ENCODE measurements at regions of chr2 and their contacts with region 1.

Region 1: GRCh38 chr2:181891966-181892798 is 652 bp downstream of the ITPRID2 start:
- DNase-seq: peak; percentile 58 to 65 (median 60)
- H3K4me3 ChIP-seq: peak overlapping the region; percentile 70 to 86
- H3K4me3 Mint-ChIP-seq: peak overlapping the region; percentile 88 to 95 (median 92)
- H3K27ac ChIP-seq: peak overlapping the region; percentile 44
- H3K27ac Mint-ChIP-seq: peak overlapping the region; percentile 55 to 91 (median 87)
- H3K4me1 ChIP-seq: peaks cover 25% of the 10 kb centered on the region
- H3K4me1 Mint-ChIP-seq: peaks cover 23 to 51% (median 29%) of the 10 kb centered on the region in 4 donors
- H3K27me3 ChIP-seq: no peaks in the 10 kb centered on the region
- H3K27me3 Mint-ChIP-seq: peaks cover 13 to 15% of the 10 kb centered on the region in 2 donors

Region 2: GRCh38 chr2:180006781-180007579 is 1885.2 kb before region 1 on chr2 and contains the start of gene CWC22:
- CTCF ChIA-PET with region 1: no interaction called
- POLR2A ChIA-PET with region 1: no interaction called
- intact Hi-C with region 1: loop called (anchors 10 kb)
- DNase-seq: peak; percentile 90 to 92 (median 91)
- H3K4me3 ChIP-seq: peak within 1 kb of the TSS; percentile 76 to 89
- H3K4me3 Mint-ChIP-seq: peak within 1 kb of the TSS; percentile 92 to 98 (median 94)
- H3K27ac ChIP-seq: peak within 1 kb of the TSS; percentile 96
- H3K27ac Mint-ChIP-seq: peak within 1 kb of the TSS; percentile 98 to 100 (median 100)
- H3K4me1 ChIP-seq: peaks cover 15% of the 10 kb centered on the region
- H3K4me1 Mint-ChIP-seq: peaks cover 22 to 48% (median 37%) of the 10 kb centered on the region in 4 donors
- H3K27me3 ChIP-seq: no peaks in the 10 kb centered on the region
- H3K27me3 Mint-ChIP-seq: no peaks in the 10 kb centered on the region
- total RNA-seq, gene CWC22: 28.9 to 31.1 TPM

Region 3: GRCh38 chr2:181904022-181904632 is 11.9 kb after region 1 on chr2:
- CTCF ChIA-PET with region 1: interaction called, 44 read pairs
- POLR2A ChIA-PET with region 1: interaction called, 3 read pairs
- intact Hi-C with region 1: no loop called
- DNase-seq: peak in 4 of 5 donors; percentile 21 to 37 (median 29)
- H3K4me3 ChIP-seq: no peak overlapping the region
- H3K4me3 Mint-ChIP-seq: no peak overlapping the region
- H3K27ac ChIP-seq: no peak overlapping the region
- H3K27ac Mint-ChIP-seq: peak overlapping the region in 1 of 7 donors; percentile 13
- H3K4me1 ChIP-seq: peaks cover 14% of the 10 kb centered on the region
- H3K4me1 Mint-ChIP-seq: peaks cover 13 to 20% (median 16%) of the 10 kb centered on the region in 4 donors
- H3K27me3 ChIP-seq: no peaks in the 10 kb centered on the region
- H3K27me3 Mint-ChIP-seq: no peaks in the 10 kb centered on the region

Region 4: GRCh38 chr2:182559623-182560022 is 667.4 kb after region 1 on chr2:
- CTCF ChIA-PET with region 1: no interaction called
- POLR2A ChIA-PET with region 1: no interaction called
- intact Hi-C with region 1: no loop called
- DNase-seq: no peak
- H3K4me3 ChIP-seq: no peak overlapping the region
- H3K4me3 Mint-ChIP-seq: no peak overlapping the region
- H3K27ac ChIP-seq: no peak overlapping the region
- H3K27ac Mint-ChIP-seq: no peak overlapping the region
- H3K4me1 ChIP-seq: no peaks in the 10 kb centered on the region
- H3K4me1 Mint-ChIP-seq: no peaks in the 10 kb centered on the region
- H3K27me3 ChIP-seq: no peaks in the 10 kb centered on the region
- H3K27me3 Mint-ChIP-seq: no peaks in the 10 kb centered on the region

Region 5: GRCh38 chr2:183038341-183039300 is 1146.4 kb after region 1 on chr2 and contains the start of gene NCKAP1:
- CTCF ChIA-PET with region 1: no interaction called
- POLR2A ChIA-PET with region 1: no interaction called
- intact Hi-C with region 1: loop called (anchors 5 kb)
- DNase-seq: peak; percentile 83 to 86 (median 85)
- H3K4me3 ChIP-seq: peak within 1 kb of the TSS; percentile 2 to 66
- H3K4me3 Mint-ChIP-seq: peak within 1 kb of the TSS; percentile 83 to 96 (median 87)
- H3K27ac ChIP-seq: no peak within 1 kb of the TSS
- H3K27ac Mint-ChIP-seq: peak within 1 kb of the TSS; percentile 57 to 87 (median 72)
- H3K4me1 ChIP-seq: peaks cover 37% of the 10 kb centered on the region
- H3K4me1 Mint-ChIP-seq: peaks cover 26 to 38% (median 31%) of the 10 kb centered on the region in 4 donors
- H3K27me3 ChIP-seq: peaks cover 13% of the 10 kb centered on the region
- H3K27me3 Mint-ChIP-seq: peaks cover 22 to 28% of the 10 kb centered on the region in 2 donors
- total RNA-seq, gene NCKAP1: 4.9 to 6.3 TPM

Measured in CD4-positive, alpha-beta memory T cell (primary cell).